MCF 10A (cell line): ENCODE measurements at regions of chr3 and their contacts with region 1.

Region 1: GRCh38 chr3:184320099-184320445 is 5.7 kb downstream of the EIF4G1 start:
- DNase-seq: peak; percentile 99
- H3K4me3 Mint-ChIP-seq: peak overlapping the region; percentile 66
- H3K27ac Mint-ChIP-seq: peak overlapping the region; percentile 62
- H3K4me1 Mint-ChIP-seq: peaks cover 39% of the 10 kb centered on the region
- H3K27me3 Mint-ChIP-seq: no peaks in the 10 kb centered on the region
- CTCF ChIP-seq: no peak

Region 2: GRCh38 chr3:184218814-184219213 is 101.3 kb before region 1 on chr3:
- CTCF ChIA-PET with region 1: no interaction called
- POLR2A ChIA-PET with region 1: no interaction called
- intact Hi-C with region 1: no loop called
- DNase-seq: no peak
- H3K4me3 Mint-ChIP-seq: no peak overlapping the region
- H3K27ac Mint-ChIP-seq: no peak overlapping the region
- H3K4me1 Mint-ChIP-seq: no peaks in the 10 kb centered on the region
- H3K27me3 Mint-ChIP-seq: no peaks in the 10 kb centered on the region
- CTCF ChIP-seq: no peak

Region 3: DNA sequence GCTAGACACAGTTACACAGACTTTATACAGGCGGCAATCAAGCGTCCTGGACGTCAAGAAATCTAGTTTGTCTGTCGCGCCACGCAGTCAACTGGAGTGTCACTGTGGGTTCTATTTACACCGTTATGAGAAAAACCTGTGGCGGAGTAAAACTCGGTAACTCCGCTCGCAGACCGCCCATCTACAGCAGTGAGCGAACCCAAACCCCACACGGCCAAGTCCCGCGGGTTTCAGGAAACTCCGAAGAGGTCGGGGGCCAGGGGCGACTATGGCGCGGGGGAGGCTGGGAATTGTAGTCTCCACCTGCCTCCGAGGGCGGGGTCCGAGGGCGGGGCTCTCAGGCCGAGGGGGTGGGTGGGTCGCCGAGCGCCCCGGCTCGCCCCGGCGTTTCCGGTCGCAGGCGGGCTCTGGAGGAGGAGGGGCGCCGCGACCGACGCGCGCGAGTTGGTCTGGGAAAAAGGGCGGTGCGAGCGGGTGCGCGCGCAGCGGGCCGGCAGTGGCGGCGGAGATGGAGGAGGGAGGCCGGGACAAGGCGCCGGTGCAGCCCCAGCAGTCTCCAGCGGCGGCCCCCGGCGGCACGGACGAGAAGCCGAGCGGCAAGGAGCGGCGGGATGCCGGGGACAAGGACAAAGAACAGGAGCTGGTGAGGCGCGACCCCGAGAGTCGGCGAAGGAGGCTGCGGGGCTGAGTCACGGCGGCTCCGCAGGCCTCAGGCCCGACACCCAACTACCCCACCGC is 21.1 kb before region 1 on chr3 and contains the start of gene PSMD2:
- CTCF ChIA-PET with region 1: interaction called, 3 read pairs
- POLR2A ChIA-PET with region 1: interaction called, 16 read pairs
- intact Hi-C with region 1: no loop called
- DNase-seq: peak; percentile 96
- H3K4me3 Mint-ChIP-seq: peak within 1 kb of the TSS; percentile 83
- H3K27ac Mint-ChIP-seq: peak within 1 kb of the TSS; percentile 82
- H3K4me1 Mint-ChIP-seq: peaks cover 5% of the 10 kb centered on the region
- H3K27me3 Mint-ChIP-seq: no peaks in the 10 kb centered on the region
- CTCF ChIP-seq: no peak
- total RNA-seq, gene PSMD2: 275 and 284 TPM in 2 replicates

Region 4: GRCh38 chr3:184335661-184336546 is 15.8 kb after region 1 on chr3:
- CTCF ChIA-PET with region 1: no interaction called
- POLR2A ChIA-PET with region 1: interaction called, 7 read pairs
- intact Hi-C with region 1: loop called (anchors 2 kb)
- DNase-seq: peak; percentile 75
- H3K4me3 Mint-ChIP-seq: peak overlapping the region; percentile 84
- H3K27ac Mint-ChIP-seq: peak overlapping the region; percentile 89
- H3K4me1 Mint-ChIP-seq: peaks cover 53% of the 10 kb centered on the region
- H3K27me3 Mint-ChIP-seq: no peaks in the 10 kb centered on the region
- CTCF ChIP-seq: no peak

Region 5: GRCh38 chr3:184362668-184363540 is 42.8 kb after region 1 on chr3:
- CTCF ChIA-PET with region 1: no interaction called
- POLR2A ChIA-PET with region 1: interaction called, 18 read pairs
- intact Hi-C with region 1: loop called (anchors 2 kb)
- DNase-seq: peak; percentile 98
- H3K4me3 Mint-ChIP-seq: peak overlapping the region; percentile 93
- H3K27ac Mint-ChIP-seq: peak overlapping the region; percentile 89
- H3K4me1 Mint-ChIP-seq: peaks cover 27% of the 10 kb centered on the region
- H3K27me3 Mint-ChIP-seq: no peaks in the 10 kb centered on the region
- CTCF ChIP-seq: peak; percentile 45